Posterior vena cava (tissue), 2 donors: ENCODE measurements at regions of chr3 and their contacts with region 1.

Region 1: DNA sequence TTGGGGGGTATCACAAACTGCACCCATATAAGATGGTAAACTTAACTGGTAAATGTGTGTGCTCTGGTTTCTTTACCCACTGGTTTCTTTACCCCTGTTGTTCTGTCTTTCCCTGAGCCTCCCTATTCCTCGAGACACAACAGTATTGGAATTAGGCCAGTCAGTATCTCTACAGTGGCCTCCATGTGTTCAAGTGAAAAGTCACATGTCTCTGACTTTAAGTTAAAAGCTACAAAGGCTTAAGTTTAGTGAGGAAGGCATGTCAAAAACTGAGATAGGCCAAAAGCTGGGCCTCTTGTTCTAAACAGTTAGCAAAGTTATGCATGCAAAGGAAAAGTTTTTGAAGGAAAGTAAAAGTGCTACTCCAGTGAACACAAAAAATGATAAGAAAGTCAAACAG is 513.3 kb downstream of the ROBO2 start:
- DNase-seq: no peak

Region 2: GRCh38 chr3:76044601-76045600 is 1508.3 kb before region 1 on chr3:
- intact Hi-C with region 1: no loop called
- DNase-seq: no peak

Region 3: DNA sequence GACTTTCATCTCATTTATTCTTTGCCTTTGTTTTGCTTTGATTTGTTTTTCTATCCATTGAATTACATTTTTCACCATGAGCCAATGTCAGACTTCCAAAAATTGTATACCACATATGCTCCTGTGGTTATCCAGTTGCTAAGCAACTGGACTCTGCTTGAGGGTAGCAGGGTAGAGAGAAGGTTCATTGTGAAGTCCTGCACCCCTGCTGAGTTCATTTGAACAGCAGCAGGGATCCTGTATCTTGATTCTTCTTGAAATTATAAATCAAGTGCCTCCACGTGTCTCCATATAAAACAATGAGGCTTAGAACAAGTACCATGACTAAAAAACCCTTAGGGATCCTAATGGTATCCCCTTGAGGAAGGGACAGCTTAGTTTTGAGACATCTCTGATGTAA is 64.0 kb before region 1 on chr3:
- intact Hi-C with region 1: loop called in 1 of 2 experiments (anchors 2 kb)
- DNase-seq: no peak

Region 4: DNA sequence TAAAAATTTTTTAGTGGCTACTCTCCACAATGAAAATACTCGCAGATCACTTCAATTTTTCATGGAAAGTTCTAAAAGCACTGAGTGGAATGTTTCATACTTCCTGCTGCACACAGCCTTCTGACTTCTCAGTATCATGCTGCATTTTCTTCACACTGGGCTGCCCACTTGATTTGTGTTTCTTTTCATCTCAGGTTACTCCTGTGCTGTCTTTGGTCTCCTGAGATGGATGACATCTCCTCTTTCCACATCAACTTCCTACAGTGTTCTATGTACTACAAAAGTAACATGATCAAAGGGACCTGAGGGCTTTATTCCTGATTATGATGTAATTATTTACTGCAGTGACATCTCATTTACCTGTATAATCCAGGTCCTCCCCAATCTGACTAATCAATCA is 414.4 kb after region 1 on chr3:
- intact Hi-C with region 1: loop called in 1 of 2 experiments (anchors 5 kb)
- DNase-seq: no peak